A549 (cell line): ENCODE measurements at regions of chr11 and their contacts with region 1.

Region 1: DNA sequence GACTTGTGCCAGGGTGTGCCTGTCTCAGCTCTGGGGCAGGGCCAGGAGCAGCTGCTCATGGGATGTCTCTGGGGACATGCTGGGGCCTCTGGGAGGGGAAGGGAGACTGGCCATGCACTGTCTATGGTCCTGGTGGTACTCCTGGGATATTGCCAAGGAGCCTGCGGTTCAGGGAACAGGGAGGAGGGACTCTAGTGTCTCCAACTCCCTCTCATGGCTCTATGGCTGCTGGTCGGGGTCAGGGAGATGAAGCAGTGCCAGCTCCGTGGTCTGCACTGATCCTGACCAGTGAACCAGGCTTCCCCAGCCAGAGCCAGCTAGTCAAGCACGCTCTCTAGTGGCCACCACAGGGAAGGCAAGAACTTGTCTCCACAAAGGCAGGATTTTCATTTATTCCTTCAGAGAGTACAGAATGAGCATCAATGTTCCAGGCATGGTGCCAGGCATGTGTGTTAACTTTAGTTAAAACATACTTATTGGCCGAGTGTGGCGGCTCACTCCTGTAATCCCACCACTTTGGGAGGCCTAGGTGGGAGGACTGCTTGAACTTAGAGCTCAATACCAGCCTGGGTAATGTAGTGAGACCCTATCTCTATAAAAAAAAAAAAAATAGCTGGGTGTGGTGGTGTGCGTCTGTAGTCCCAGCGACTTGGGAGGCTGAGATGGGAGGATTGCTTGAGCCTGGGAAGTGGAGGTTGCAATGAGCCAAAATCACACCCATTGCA is 2.5 kb upstream of the BEST1 start:
- DNase-seq: peak; percentile 82 to 89
- ATAC-seq: peak; percentile 83 to 91
- H3K4me3 ChIP-seq: no peak overlapping the region
- H3K27ac ChIP-seq: peak overlapping the region; percentile 71 to 72
- H3K4me1 ChIP-seq: peaks cover 35% of the 10 kb centered on the region
- CTCF ChIP-seq: peak; percentile 97
- EP300 ChIP-seq: no peak
- POLR2A ChIP-seq: no peak
- RAD21 ChIP-seq: peak; percentile 98 to 99

Region 2: DNA sequence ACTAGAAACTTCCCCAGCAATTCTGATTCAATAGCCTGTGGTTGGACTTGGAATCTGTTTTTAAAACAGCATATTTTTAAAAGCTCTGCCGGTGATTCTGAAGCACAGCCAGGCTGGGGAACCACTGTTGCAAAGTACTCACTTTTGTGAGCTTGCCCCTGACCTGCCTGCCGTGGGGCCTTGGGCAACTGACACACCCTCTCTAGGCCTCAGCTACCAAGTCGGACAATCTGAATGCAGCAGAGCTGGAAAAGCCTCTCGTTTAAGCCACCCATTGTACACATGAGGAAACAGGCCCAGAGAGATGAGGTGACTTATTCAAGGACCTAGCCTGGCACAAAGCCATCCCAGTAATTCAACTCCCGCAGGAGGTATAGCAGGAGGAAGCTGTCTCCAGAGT is 1004.6 kb before region 1 on chr11:
- CTCF ChIA-PET with region 1: no interaction called
- POLR2A ChIA-PET with region 1: no interaction called
- DNase-seq: no peak
- ATAC-seq: no peak
- H3K4me3 ChIP-seq: no peak overlapping the region
- H3K27ac ChIP-seq: no peak overlapping the region
- H3K4me1 ChIP-seq: no peaks in the 10 kb centered on the region
- CTCF ChIP-seq: no peak
- EP300 ChIP-seq: no peak
- POLR2A ChIP-seq: no peak
- RAD21 ChIP-seq: no peak

Region 3: GRCh38 chr11:61737131-61737530 is 210.5 kb before region 1 on chr11:
- CTCF ChIA-PET with region 1: no interaction called
- POLR2A ChIA-PET with region 1: no interaction called
- DNase-seq: no peak
- ATAC-seq: peak; percentile 22 to 67; a peak in 4 of 6 replicates
- H3K4me3 ChIP-seq: no peak overlapping the region
- H3K27ac ChIP-seq: no peak overlapping the region
- H3K4me1 ChIP-seq: no peaks in the 10 kb centered on the region
- CTCF ChIP-seq: no peak
- EP300 ChIP-seq: no peak
- POLR2A ChIP-seq: no peak
- RAD21 ChIP-seq: no peak

Region 4: GRCh38 chr11:61871158-61871597 is 76.5 kb before region 1 on chr11:
- CTCF ChIA-PET with region 1: interaction called, 94 read pairs
- POLR2A ChIA-PET with region 1: no interaction called
- DNase-seq: peak; percentile 82 to 91
- ATAC-seq: peak; percentile 80 to 93
- H3K4me3 ChIP-seq: no peak overlapping the region
- H3K27ac ChIP-seq: peak overlapping the region; percentile 47 to 52; a peak in 5 of 6 replicates
- H3K4me1 ChIP-seq: peaks cover 31% of the 10 kb centered on the region
- CTCF ChIP-seq: peak; percentile 95
- EP300 ChIP-seq: no peak
- POLR2A ChIP-seq: no peak
- RAD21 ChIP-seq: peak; percentile 95 to 97

Region 5: DNA sequence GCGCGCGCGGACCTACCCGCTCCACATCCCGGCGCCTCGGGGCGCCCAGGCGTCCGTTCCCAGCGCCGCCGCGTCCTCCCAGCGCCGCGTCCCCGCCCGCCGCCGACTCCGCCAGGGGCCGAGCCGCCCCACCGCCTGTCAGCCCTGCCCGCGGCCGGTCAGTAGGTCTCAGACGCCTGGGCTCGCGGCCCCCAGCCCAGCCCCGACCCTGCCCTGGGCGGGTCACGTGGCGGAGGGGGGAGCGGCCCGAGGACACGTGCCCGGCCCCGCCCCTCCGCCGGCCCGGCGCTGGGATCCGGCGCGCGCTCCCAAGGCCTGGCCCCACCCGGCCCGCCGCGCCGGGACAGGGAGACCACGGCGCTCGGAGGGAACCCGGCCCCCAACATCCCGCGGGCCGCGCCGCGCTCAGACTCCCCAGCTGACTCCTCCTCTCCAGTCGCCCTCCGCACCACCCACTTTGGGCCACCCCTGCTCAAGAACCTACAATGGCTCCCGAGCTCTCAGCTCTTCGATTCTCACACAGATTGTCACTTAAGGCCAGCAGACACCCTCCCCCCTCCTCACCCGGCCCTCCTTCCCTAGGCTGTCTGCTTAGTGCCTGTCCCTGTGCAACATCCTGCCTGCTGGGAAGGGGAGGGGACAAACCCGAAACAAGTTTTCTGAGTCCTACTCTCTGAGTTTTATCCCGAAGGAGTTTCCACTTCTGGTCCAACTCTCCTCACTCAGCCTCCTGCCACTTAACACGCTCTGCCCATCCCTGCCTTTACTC is 30.1 kb before region 1 on chr11 and contains the start of gene RAB3IL1:
- CTCF ChIA-PET with region 1: interaction called, 565 read pairs
- POLR2A ChIA-PET with region 1: no interaction called
- DNase-seq: peak; percentile 30 to 66
- ATAC-seq: peak; percentile 64 to 65
- H3K4me3 ChIP-seq: peak within 1 kb of the TSS; percentile 63
- H3K27ac ChIP-seq: peak within 1 kb of the TSS; percentile 79 to 94
- H3K4me1 ChIP-seq: peaks cover 24% of the 10 kb centered on the region
- CTCF ChIP-seq: no peak
- EP300 ChIP-seq: no peak
- POLR2A ChIP-seq: no peak
- RAD21 ChIP-seq: no peak
- polyA plus RNA-seq, gene RAB3IL1: 3.8 and 5.8 TPM in 2 replicates

Region 6: DNA sequence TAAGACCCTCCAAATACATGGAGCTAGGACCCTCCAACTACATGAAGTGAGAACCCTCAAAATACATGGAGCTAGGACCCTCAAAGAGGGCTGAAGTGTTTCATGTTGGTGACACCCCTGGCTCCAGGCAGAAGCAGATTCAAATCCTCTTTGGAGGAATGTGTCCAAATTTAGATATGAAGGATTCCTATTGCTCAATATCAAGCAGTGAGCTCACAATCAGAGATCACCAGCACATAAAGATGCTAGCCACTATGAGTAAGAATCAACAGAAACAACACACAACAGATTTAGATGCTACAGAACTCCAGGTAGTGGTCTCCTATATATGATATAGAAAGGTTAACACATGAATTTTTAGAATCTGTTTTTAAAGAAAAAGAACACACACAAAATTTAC is 19.0 kb before region 1 on chr11:
- CTCF ChIA-PET with region 1: interaction called, 41 read pairs
- POLR2A ChIA-PET with region 1: no interaction called
- DNase-seq: no peak
- ATAC-seq: no peak
- H3K4me3 ChIP-seq: no peak overlapping the region
- H3K27ac ChIP-seq: no peak overlapping the region
- H3K4me1 ChIP-seq: peaks cover 3% of the 10 kb centered on the region; the same call in 2 of the 3 replicates
- CTCF ChIP-seq: no peak
- EP300 ChIP-seq: no peak
- POLR2A ChIP-seq: no peak
- RAD21 ChIP-seq: no peak

Region 7: GRCh38 chr11:61978703-61979661 is 31.3 kb after region 1 on chr11:
- CTCF ChIA-PET with region 1: interaction called, 18 read pairs
- POLR2A ChIA-PET with region 1: no interaction called
- DNase-seq: no peak
- ATAC-seq: no peak
- H3K4me3 ChIP-seq: no peak overlapping the region
- H3K27ac ChIP-seq: peak overlapping the region; percentile 97 to 99
- H3K4me1 ChIP-seq: peaks cover 57% of the 10 kb centered on the region
- CTCF ChIP-seq: no peak
- EP300 ChIP-seq: no peak
- POLR2A ChIP-seq: no peak
- RAD21 ChIP-seq: no peak

Region 8: DNA sequence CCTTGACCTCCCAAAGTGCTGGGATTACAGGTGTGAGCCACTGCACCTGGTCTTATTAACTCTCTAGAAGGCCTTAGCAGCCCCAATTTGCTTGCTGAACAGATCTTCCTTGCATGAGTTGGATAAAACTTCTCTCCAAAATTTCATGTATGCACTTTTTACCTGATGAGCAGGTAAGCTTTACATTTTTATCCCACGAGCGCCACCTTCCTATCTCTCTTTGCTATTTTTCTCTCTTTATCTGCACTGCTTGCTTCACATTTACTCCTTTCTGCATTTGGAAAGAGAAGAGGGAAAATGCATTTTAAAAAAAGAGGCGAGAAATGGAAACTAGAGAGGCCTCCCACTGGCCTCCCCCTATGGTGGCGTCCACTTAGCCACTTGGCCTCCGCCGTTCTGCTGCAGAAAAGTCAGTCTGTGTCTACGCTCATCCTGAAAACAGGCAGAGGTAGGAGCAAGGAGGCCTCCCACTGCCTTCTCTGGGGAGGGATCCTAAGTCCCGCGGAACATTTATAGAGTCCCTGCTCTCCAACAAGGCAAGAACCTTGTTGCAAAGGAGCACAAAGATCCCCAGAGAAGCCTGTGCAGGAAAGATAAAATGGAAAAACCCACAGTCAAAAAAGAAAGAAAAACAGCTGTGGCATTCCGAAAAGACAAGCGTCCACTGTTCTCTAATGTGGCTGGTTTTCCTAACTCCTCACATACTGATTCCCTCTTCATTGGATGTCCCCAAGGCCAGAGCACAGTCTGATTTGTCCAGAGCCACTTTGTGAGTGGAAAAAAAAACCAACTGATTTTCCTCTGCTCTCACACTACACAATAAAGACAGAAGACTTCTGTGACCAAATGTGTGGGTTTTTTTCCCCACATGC is 113.9 kb after region 1 on chr11:
- CTCF ChIA-PET with region 1: interaction called, 12 read pairs
- POLR2A ChIA-PET with region 1: no interaction called
- DNase-seq: no peak
- ATAC-seq: no peak
- H3K4me3 ChIP-seq: no peak overlapping the region
- H3K27ac ChIP-seq: no peak overlapping the region
- H3K4me1 ChIP-seq: no peaks in the 10 kb centered on the region
- CTCF ChIP-seq: no peak
- EP300 ChIP-seq: no peak
- POLR2A ChIP-seq: no peak
- RAD21 ChIP-seq: no peak